ENCODE measurements at regions of chr19 and their contacts with region 1.

Region 1: GRCh38 chr19:8194528-8195267 is 14.5 kb upstream of the CERS4 start:
- DNase-seq: peak; percentile 24 to 76 (median 47)
- H3K4me3 ChIP-seq: peak overlapping the region; percentile 8
- H3K4me3 Mint-ChIP-seq: peak overlapping the region; percentile 63 to 91 (median 84)
- H3K27ac ChIP-seq: no peak overlapping the region
- H3K27ac Mint-ChIP-seq: peak overlapping the region; percentile 91 to 99 (median 98)
- H3K4me1 ChIP-seq: peaks cover 30% of the 10 kb centered on the region
- H3K4me1 Mint-ChIP-seq: peaks cover 37 to 51% (median 50%) of the 10 kb centered on the region in 3 donors
- H3K27me3 ChIP-seq: no peaks in the 10 kb centered on the region
- H3K27me3 Mint-ChIP-seq: peaks cover 0 to 6% of the 10 kb centered on the region in 2 donors

Region 2: GRCh38 chr19:8206147-8207087 is 11.7 kb after region 1 on chr19:
- CTCF ChIA-PET with region 1: interaction called, 4 read pairs
- POLR2A ChIA-PET with region 1: interaction called, 10 read pairs
- DNase-seq: no peak
- H3K4me3 ChIP-seq: no peak overlapping the region
- H3K4me3 Mint-ChIP-seq: peak overlapping the region in 3 of 7 donors; percentile 15 to 55 (median 26)
- H3K27ac ChIP-seq: no peak overlapping the region
- H3K27ac Mint-ChIP-seq: peak overlapping the region in 1 of 8 donors; percentile 51
- H3K4me1 ChIP-seq: peaks cover 15% of the 10 kb centered on the region
- H3K4me1 Mint-ChIP-seq: peaks cover 11 to 32% (median 12%) of the 10 kb centered on the region in 3 donors
- H3K27me3 ChIP-seq: no peaks in the 10 kb centered on the region
- H3K27me3 Mint-ChIP-seq: peaks cover 0 to 4% of the 10 kb centered on the region in 2 donors

Measured in CD8-positive, alpha-beta memory T cell (primary cell).